ENCODE measurements at regions of chr4 and their contacts with region 1.

Region 1: GRCh38 chr4:158729716-158730559 is 6.7 kb upstream of the PPID start:
- DNase-seq: peak; percentile 67
- ATAC-seq: peak; percentile 99
- H3K4me3 ChIP-seq: peak overlapping the region in 2 of 3 experiments; percentile 13 to 14; a peak in 2 of 6 replicates
- H3K27ac ChIP-seq: no peak overlapping the region
- H3K4me1 ChIP-seq: peaks cover 21% of the 10 kb centered on the region
- H3K27me3 ChIP-seq: no peaks in the 10 kb centered on the region; a peak in 1 of 5 replicates
- CTCF ChIP-seq: peak; percentile 93
- EP300 ChIP-seq: no peak
- POLR2A ChIP-seq: no peak
- RAD21 ChIP-seq: peak; percentile 90

Region 2: GRCh38 chr4:158051401-158052235 is 678.3 kb before region 1 on chr4:
- CTCF ChIA-PET with region 1: no interaction called
- POLR2A ChIA-PET with region 1: no interaction called
- in situ Hi-C with region 1: no loop called
- intact Hi-C with region 1: no loop called
- DNase-seq: no peak
- ATAC-seq: no peak
- H3K4me3 ChIP-seq: no peak overlapping the region
- H3K27ac ChIP-seq: no peak overlapping the region
- H3K4me1 ChIP-seq: peaks cover 14% of the 10 kb centered on the region
- H3K27me3 ChIP-seq: no peaks in the 10 kb centered on the region
- CTCF ChIP-seq: no peak
- EP300 ChIP-seq: no peak
- POLR2A ChIP-seq: no peak
- RAD21 ChIP-seq: no peak

Region 3: GRCh38 chr4:158782551-158783360 is 52.8 kb after region 1 on chr4:
- CTCF ChIA-PET with region 1: no interaction called
- POLR2A ChIA-PET with region 1: no interaction called
- in situ Hi-C with region 1: no loop called
- intact Hi-C with region 1: no loop called
- DNase-seq: peak; percentile 72
- ATAC-seq: peak; percentile 99
- H3K4me3 ChIP-seq: peak overlapping the region in 2 of 3 experiments; percentile 12 to 17; a peak in 1 of 6 replicates
- H3K27ac ChIP-seq: peak overlapping the region; percentile 68
- H3K4me1 ChIP-seq: peaks cover 77% of the 10 kb centered on the region
- H3K27me3 ChIP-seq: no peaks in the 10 kb centered on the region
- CTCF ChIP-seq: no peak
- EP300 ChIP-seq: peak in 1 of 2 experiments; percentile 25; a peak in 1 of 4 replicates
- POLR2A ChIP-seq: no peak
- RAD21 ChIP-seq: no peak

Region 4: GRCh38 chr4:158845311-158846041 is 115.5 kb after region 1 on chr4:
- CTCF ChIA-PET with region 1: interaction called, 30 read pairs
- POLR2A ChIA-PET with region 1: no interaction called
- in situ Hi-C with region 1: loop called (anchors 5 kb)
- intact Hi-C with region 1: no loop called
- DNase-seq: no peak
- ATAC-seq: peak; percentile 76
- H3K4me3 ChIP-seq: no peak overlapping the region
- H3K27ac ChIP-seq: no peak overlapping the region
- H3K4me1 ChIP-seq: peaks cover 33% of the 10 kb centered on the region
- H3K27me3 ChIP-seq: no peaks in the 10 kb centered on the region
- CTCF ChIP-seq: no peak
- EP300 ChIP-seq: no peak
- POLR2A ChIP-seq: no peak
- RAD21 ChIP-seq: no peak

Region 5: GRCh38 chr4:159016593-159017024 is 286.7 kb after region 1 on chr4:
- CTCF ChIA-PET with region 1: no interaction called
- POLR2A ChIA-PET with region 1: no interaction called
- in situ Hi-C with region 1: loop called (anchors 25 kb)
- intact Hi-C with region 1: no loop called
- DNase-seq: peak; percentile 53
- ATAC-seq: peak; percentile 92
- H3K4me3 ChIP-seq: peak overlapping the region in 2 of 3 experiments; percentile 29 to 38; a peak in 3 of 6 replicates
- H3K27ac ChIP-seq: no peak overlapping the region
- H3K4me1 ChIP-seq: peaks cover 20% of the 10 kb centered on the region
- H3K27me3 ChIP-seq: no peaks in the 10 kb centered on the region
- CTCF ChIP-seq: peak; percentile 76
- EP300 ChIP-seq: no peak
- POLR2A ChIP-seq: no peak
- RAD21 ChIP-seq: peak; percentile 36; the same call in 1 of the 2 replicates

Region 6: DNA sequence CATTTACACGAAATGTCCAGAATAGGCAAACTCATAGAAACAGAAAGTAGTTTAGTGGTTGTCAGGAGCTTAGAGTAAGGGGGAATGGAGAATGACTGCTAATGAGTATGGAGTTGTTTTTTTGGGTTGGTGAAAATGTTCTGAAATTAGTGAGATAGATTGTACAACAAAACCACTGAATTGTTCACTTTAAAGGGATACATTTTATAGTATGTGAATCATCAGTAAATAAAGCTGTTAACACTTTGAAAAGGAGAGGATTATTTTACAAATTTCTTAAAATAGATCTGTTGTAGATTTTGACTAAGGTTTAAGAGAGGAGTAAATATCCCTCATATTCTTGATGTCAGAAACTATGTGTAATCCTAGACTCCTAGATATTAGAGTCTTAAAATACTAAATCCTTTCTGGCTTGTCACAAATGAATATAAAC is 455.7 kb after region 1 on chr4:
- CTCF ChIA-PET with region 1: no interaction called
- POLR2A ChIA-PET with region 1: no interaction called
- in situ Hi-C with region 1: loop called (anchors 10 kb)
- intact Hi-C with region 1: no loop called
- DNase-seq: no peak
- ATAC-seq: no peak
- H3K4me3 ChIP-seq: no peak overlapping the region
- H3K27ac ChIP-seq: no peak overlapping the region
- H3K4me1 ChIP-seq: no peaks in the 10 kb centered on the region
- H3K27me3 ChIP-seq: no peaks in the 10 kb centered on the region
- CTCF ChIP-seq: no peak
- EP300 ChIP-seq: no peak
- POLR2A ChIP-seq: no peak
- RAD21 ChIP-seq: no peak

Measured in HepG2 (cell line).